HepG2 (cell line): ENCODE measurements at regions of chr17 and their contacts with region 1.

Region 1: DNA sequence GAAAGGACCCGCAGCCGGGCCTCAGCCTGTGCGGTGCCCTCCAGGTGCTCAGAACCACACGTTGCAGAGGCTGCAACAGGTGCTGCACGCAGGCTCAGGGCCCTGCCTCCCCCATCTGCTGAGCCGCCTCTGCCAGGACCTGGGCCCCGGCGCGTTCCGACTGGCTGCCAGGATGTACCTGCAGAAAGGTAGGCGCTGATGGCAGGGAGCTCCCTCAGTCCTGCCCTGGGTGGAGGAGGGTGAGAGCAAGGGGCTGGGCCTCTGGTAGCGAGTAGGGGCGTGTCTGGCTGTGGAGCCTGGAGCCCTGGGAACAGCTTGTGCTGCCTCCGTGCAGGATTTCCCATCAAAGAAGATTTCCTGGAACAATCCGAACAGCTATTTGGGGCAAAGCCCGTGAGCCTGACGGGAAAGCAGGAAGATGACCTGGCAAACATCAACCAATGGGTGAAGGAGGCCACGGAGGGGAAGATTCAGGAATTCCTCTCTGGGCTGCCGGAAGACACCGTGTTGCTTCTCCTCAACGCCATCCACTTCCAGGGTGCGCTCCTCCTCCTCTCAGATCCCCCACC is 4.4 kb downstream of the SERPINF2 start:
- DNase-seq: no peak
- ATAC-seq: no peak
- H3K4me3 ChIP-seq: no peak overlapping the region
- H3K27ac ChIP-seq: peak overlapping the region; percentile 11
- H3K4me1 ChIP-seq: peaks cover 60% of the 10 kb centered on the region
- H3K27me3 ChIP-seq: no peaks in the 10 kb centered on the region
- CTCF ChIP-seq: no peak
- EP300 ChIP-seq: no peak
- POLR2A ChIP-seq: peak in 1 of 2 experiments; percentile 20; a peak in 1 of 4 replicates
- RAD21 ChIP-seq: no peak

Region 2: GRCh38 chr17:1577182-1577581 is 169.9 kb before region 1 on chr17:
- CTCF ChIA-PET with region 1: no interaction called
- POLR2A ChIA-PET with region 1: no interaction called
- in situ Hi-C with region 1: no loop called
- intact Hi-C with region 1: no loop called
- DNase-seq: peak; percentile 57
- ATAC-seq: peak; percentile 58
- H3K4me3 ChIP-seq: peak overlapping the region in 1 of 3 experiments; percentile 28; a peak in 1 of 6 replicates
- H3K27ac ChIP-seq: peak overlapping the region; percentile 25
- H3K4me1 ChIP-seq: peaks cover 60% of the 10 kb centered on the region
- H3K27me3 ChIP-seq: no peaks in the 10 kb centered on the region
- CTCF ChIP-seq: peak; percentile 22
- EP300 ChIP-seq: peak in 1 of 2 experiments; percentile 8; a peak in 1 of 4 replicates
- POLR2A ChIP-seq: no peak
- RAD21 ChIP-seq: no peak

Region 3: GRCh38 chr17:1730328-1731193 is 16.5 kb before region 1 on chr17:
- CTCF ChIA-PET with region 1: no interaction called
- POLR2A ChIA-PET with region 1: interaction called, 299 read pairs
- in situ Hi-C with region 1: no loop called
- intact Hi-C with region 1: no loop called
- DNase-seq: no peak
- ATAC-seq: peak; percentile 6; the same call in 2 of the 3 replicates
- H3K4me3 ChIP-seq: no peak overlapping the region
- H3K27ac ChIP-seq: no peak overlapping the region
- H3K4me1 ChIP-seq: peaks cover 49% of the 10 kb centered on the region
- H3K27me3 ChIP-seq: no peaks in the 10 kb centered on the region
- CTCF ChIP-seq: no peak
- EP300 ChIP-seq: no peak
- POLR2A ChIP-seq: no peak
- RAD21 ChIP-seq: no peak